Right ventricle myocardium inferior (tissue), 1 donor: ENCODE measurements at regions of chr20 and their contacts with region 1.

Region 1: GRCh38 chr20:3204124-3204822 is at the start of gene DDRGK1:
- DNase-seq: peak; percentile 93
- ATAC-seq: peak; percentile 96
- total RNA-seq, gene DDRGK1: 36.5 TPM

Region 2: GRCh38 chr20:3068986-3069900 is 135.0 kb before region 1 on chr20:
- intact Hi-C with region 1: no loop called
- DNase-seq: no peak
- ATAC-seq: no peak

Region 3: GRCh38 chr20:3165406-3166337 is 38.6 kb before region 1 on chr20:
- intact Hi-C with region 1: loop called (anchors 5 kb)
- DNase-seq: peak; percentile 87
- ATAC-seq: peak; percentile 24